ENCODE measurements at regions of chr15 and their contacts with region 1.

Region 1: GRCh38 chr15:42984493-42985034 is 64.0 kb upstream of the TTBK2 start:
- DNase-seq: no peak
- H3K4me3 ChIP-seq: no peak overlapping the region
- H3K27ac ChIP-seq: no peak overlapping the region
- H3K4me1 ChIP-seq: no peaks in the 10 kb centered on the region
- H3K27me3 ChIP-seq: no peaks in the 10 kb centered on the region
- CTCF ChIP-seq: peak in 1 of 2 donors; percentile 19

Region 2: DNA sequence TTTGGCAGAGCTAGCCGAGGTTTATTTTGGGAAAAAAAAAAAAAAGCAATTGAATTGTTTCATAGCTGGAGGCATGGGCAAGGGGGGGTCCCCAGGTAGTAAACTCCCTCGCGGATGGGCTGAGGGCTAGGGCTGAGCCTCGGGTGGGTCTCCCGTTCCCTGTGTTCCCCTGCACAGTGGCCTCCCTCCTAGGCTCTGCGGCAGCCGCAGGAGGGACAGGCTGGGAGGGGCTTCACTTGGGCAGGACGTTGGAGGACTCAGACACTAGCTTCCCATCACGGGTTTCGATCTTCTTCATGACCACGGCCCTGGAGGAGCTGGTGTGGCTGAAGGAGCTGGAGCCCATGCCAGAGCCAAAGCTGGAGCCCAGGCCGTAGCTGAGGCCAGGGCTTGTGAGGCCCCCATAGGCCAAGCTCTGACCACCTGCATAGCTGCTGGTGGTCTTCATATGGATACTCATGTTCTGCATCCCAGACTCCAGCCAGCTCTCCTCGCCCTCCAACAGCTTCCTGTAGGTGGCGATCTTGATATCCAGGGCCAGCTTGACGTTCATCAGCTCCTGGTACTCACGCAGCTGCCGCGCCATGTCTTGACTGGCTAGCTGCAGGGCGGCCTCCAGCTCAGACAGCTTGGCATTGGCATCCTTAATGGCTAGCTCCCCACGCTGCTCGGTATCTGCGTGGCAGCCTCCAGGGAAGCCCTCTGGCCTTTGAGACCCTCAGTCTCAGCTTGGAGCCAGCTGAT is 183.7 kb before region 1 on chr15:
- CTCF ChIA-PET with region 1: no interaction called
- dilution Hi-C with region 1: no loop called
- in situ Hi-C with region 1: no loop called
- intact Hi-C with region 1: no loop called
- DNase-seq: no peak
- H3K4me3 ChIP-seq: no peak overlapping the region
- H3K27ac ChIP-seq: no peak overlapping the region
- H3K4me1 ChIP-seq: peaks cover 5% of the 10 kb centered on the region
- H3K27me3 ChIP-seq: no peaks in the 10 kb centered on the region
- CTCF ChIP-seq: peak in 1 of 2 donors; percentile 7

Region 3: GRCh38 chr15:42973114-42973513 is 11.4 kb before region 1 on chr15:
- CTCF ChIA-PET with region 1: no interaction called
- dilution Hi-C with region 1: no loop called
- in situ Hi-C with region 1: no loop called
- intact Hi-C with region 1: no loop called
- DNase-seq: no peak
- H3K4me3 ChIP-seq: no peak overlapping the region
- H3K27ac ChIP-seq: no peak overlapping the region
- H3K4me1 ChIP-seq: no peaks in the 10 kb centered on the region
- H3K27me3 ChIP-seq: no peaks in the 10 kb centered on the region
- CTCF ChIP-seq: no peak

Region 4: DNA sequence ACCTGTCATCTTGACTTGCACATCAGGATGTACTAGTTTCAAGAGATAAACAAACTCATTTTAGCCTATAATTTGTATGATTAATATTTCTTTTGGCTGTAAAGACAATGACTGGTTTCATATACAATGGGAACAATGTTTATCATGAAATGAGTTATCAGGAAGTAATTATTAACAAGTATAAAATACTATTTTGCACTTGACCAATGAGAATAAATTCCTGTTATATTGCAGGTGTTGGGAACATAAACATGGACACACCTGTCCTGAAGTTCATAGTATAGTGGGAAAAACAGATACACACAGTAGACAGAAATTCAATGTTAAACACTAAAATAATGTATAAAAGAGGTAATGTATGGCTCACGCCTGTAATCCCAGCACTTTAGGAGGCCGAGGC is 64.4 kb after region 1 on chr15:
- CTCF ChIA-PET with region 1: no interaction called
- dilution Hi-C with region 1: loop called (anchors 5 kb)
- in situ Hi-C with region 1: no loop called
- intact Hi-C with region 1: no loop called
- DNase-seq: no peak
- H3K4me3 ChIP-seq: no peak overlapping the region
- H3K27ac ChIP-seq: no peak overlapping the region
- H3K4me1 ChIP-seq: no peaks in the 10 kb centered on the region
- H3K27me3 ChIP-seq: no peaks in the 10 kb centered on the region
- CTCF ChIP-seq: no peak